ENCODE measurements at regions of chr3 and their contacts with region 1.

Region 1: DNA sequence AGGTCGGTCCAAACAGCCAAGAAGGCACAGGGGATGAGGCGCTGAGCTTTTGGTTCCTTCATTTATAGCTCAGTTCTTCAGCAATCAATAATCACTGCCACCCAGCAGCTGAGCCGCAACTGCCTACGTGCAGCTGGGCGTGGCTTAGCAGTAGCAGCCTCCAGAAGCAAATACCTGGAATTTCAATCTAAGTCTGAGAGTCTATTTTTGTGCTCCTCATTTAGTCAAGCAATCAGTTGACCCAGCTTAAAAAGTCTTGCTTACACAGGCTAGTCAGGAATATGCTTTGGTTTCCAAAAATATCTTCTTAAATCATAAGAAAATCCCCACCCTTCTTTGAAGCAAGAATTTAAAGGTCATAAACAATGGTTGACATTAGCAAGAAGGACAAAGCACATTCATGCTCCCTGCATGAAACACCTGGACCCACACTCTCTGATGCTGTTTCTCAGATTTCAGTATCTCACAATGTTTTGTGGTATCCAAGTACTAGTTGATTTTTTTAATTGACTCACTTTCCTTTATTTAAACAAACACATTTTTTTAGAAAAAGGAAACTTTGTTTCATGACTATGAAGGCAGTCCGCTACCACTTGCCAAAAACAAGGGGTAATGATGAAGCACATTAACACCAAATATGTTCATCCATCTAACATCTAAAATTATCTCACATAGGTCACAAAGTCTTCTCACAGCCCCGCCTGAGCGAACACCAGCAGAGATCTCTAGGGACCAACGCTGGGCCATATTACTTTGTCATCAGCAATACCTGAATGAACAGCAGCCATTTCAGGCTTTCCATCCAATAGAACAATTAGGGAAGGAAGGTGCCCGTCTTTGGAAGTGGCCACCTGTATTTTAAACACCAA is 106.1 kb downstream of the OXNAD1 start:
- DNase-seq: peak; percentile 72
- H3K4me3 Mint-ChIP-seq: peak overlapping the region; percentile 30
- H3K27ac Mint-ChIP-seq: peak overlapping the region; percentile 90
- H3K4me1 Mint-ChIP-seq: peaks cover 74% of the 10 kb centered on the region
- H3K27me3 Mint-ChIP-seq: no peaks in the 10 kb centered on the region

Region 2: DNA sequence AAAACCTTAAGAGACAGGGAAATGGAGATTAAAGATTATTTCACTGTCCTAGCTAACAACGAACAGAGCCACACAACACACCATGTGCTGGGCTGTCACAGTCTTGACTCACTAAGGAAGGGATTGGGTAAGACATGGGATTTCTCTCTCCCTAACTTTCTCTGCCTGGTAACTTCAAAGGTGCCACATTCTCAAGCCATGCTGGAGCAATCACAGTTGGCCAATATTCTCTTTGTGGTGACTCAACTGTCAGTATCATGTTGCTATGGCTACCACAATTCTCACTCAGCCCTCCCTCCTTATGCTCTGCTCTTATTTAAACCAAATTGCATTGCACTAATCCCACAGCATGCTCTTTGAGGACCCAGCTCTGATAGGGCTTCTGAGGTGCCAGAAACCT is 32.1 kb before region 1 on chr3:
- intact Hi-C with region 1: loop called (anchors 5 kb)
- DNase-seq: peak; percentile 71
- H3K4me3 Mint-ChIP-seq: no peak overlapping the region
- H3K27ac Mint-ChIP-seq: peak overlapping the region; percentile 1
- H3K4me1 Mint-ChIP-seq: peaks cover 45% of the 10 kb centered on the region
- H3K27me3 Mint-ChIP-seq: no peaks in the 10 kb centered on the region

Region 3: GRCh38 chr3:16697443-16698147 is 326.5 kb after region 1 on chr3:
- intact Hi-C with region 1: no loop called
- DNase-seq: no peak
- H3K4me3 Mint-ChIP-seq: no peak overlapping the region
- H3K27ac Mint-ChIP-seq: no peak overlapping the region
- H3K4me1 Mint-ChIP-seq: no peaks in the 10 kb centered on the region
- H3K27me3 Mint-ChIP-seq: peaks cover 18% of the 10 kb centered on the region